Caco-2 (cell line): ENCODE measurements at regions of chr11 and their contacts with region 1.

Region 1: DNA sequence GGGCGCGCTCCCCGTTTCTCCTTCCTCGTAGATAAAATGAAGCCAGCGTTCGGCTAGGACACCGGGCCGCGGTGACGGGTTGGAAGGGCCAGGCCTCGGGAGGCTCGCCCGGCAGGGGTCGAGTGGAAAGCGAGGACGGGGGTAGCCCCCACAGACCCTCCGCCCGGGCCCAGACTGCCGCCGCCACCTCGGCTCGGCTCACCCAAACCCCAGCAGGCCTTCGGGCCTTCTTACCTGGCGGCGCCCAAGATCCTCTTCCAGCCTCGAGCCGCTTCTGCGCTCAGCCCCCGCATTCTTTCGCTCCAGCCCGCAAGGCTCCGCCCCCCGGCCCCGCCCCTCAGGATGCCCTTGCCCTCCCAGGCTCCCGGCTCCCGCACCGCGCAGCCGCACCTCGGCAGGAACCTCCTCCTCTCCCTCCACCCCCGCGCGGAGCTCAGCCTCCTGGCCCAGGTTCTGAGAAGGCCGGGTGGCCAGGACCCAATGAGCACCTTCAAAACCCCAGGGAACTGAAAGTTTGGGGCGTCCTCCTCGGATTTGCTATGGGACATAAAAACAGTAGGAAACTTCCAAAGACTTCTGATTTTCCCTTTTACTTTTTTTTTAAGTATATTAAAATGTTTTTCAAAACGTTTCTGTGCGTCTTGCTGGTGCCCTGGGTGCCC is at the start of gene CD59:
- DNase-seq: peak; percentile 96 to 98
- H3K4me3 ChIP-seq: peak within 1 kb of the TSS; percentile 86
- H3K4me3 Mint-ChIP-seq: peak within 1 kb of the TSS; percentile 84
- H3K27ac Mint-ChIP-seq: peak within 1 kb of the TSS; percentile 84
- H3K4me1 ChIP-seq: peaks cover 22% of the 10 kb centered on the region
- H3K4me1 Mint-ChIP-seq: peaks cover 24% of the 10 kb centered on the region
- H3K27me3 ChIP-seq: no peaks in the 10 kb centered on the region
- H3K27me3 Mint-ChIP-seq: no peaks in the 10 kb centered on the region
- CTCF ChIP-seq: peak in 1 of 2 experiments; percentile 4
- total RNA-seq, gene CD59: 149 and 152 TPM in 2 replicates

Region 2: GRCh38 chr11:33507967-33508366 is 228.3 kb before region 1 on chr11:
- CTCF ChIA-PET with region 1: no interaction called
- POLR2A ChIA-PET with region 1: no interaction called
- intact Hi-C with region 1: no loop called
- DNase-seq: peak; percentile 39 to 56
- H3K4me3 ChIP-seq: no peak overlapping the region
- H3K4me3 Mint-ChIP-seq: no peak overlapping the region
- H3K27ac Mint-ChIP-seq: no peak overlapping the region
- H3K4me1 ChIP-seq: no peaks in the 10 kb centered on the region
- H3K4me1 Mint-ChIP-seq: no peaks in the 10 kb centered on the region
- H3K27me3 ChIP-seq: no peaks in the 10 kb centered on the region
- H3K27me3 Mint-ChIP-seq: peaks cover 10% of the 10 kb centered on the region
- CTCF ChIP-seq: no peak

Region 3: GRCh38 chr11:33700425-33701271 is 35.6 kb before region 1 on chr11 and contains the start of gene C11orf91:
- CTCF ChIA-PET with region 1: no interaction called
- POLR2A ChIA-PET with region 1: no interaction called
- intact Hi-C with region 1: loop called (anchors 5 kb)
- DNase-seq: peak; percentile 94 to 98
- H3K4me3 ChIP-seq: peak within 1 kb of the TSS; percentile 85
- H3K4me3 Mint-ChIP-seq: peak within 1 kb of the TSS; percentile 85
- H3K27ac Mint-ChIP-seq: peak within 1 kb of the TSS; percentile 66
- H3K4me1 ChIP-seq: peaks cover 18% of the 10 kb centered on the region
- H3K4me1 Mint-ChIP-seq: peaks cover 12% of the 10 kb centered on the region
- H3K27me3 ChIP-seq: no peaks in the 10 kb centered on the region
- H3K27me3 Mint-ChIP-seq: peaks cover 2% of the 10 kb centered on the region
- CTCF ChIP-seq: no peak
- total RNA-seq, gene C11orf91: not detected in 2 replicates